GM18951 (cell line): ENCODE measurements at regions of chr17 and their contacts with region 1.

Region 1: GRCh38 chr17:82153745-82154375 is 55.8 kb upstream of the FASN start:
- POLR2A ChIP-seq: no peak

Region 2: DNA sequence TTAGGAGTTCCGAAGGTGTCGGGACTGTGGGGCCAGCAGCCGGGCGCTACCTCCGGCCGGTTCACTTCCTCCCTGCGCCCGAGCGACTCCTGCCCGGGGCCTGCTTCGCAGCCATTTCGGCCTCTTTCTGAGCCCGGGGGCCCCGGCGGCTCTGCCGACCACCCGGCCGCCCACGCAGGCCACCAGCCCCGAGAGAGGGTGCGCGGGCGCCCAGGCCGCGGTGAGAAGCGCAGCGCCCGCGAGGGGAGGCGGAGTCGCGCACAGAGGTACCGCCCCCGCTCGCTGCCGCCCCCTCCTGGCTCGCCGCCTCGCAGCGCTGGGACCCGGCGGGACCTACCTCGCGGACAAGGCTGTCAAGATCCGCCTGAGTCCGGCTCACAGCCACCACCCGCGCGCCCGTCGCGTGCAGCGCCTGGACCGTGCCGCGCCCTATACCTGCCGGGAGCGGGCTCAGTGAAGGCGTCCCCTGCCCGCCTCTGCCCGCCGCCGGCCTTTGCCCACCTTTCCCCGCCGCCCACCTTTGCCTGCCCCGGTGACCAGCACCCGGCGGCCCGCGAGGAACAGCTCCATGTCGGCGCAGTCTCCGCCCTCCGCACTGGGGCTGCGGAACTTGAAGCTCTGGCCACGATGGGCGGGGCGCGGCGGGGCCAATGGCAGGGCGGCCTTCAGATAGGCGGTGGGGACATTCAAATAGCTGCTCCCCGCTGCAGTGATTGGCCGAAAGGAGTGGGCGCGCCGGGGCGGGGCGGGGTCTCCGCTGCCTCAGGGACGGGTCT is 116.6 kb before region 1 on chr17 and contains the start of gene DCXR:
- in situ Hi-C with region 1: loop called (anchors 25 kb)
- POLR2A ChIP-seq: peak; percentile 98